ENCODE measurements at regions of chr1 and their contacts with region 1.

Region 1: GRCh38 chr1:205711104-205712020 is 31.1 kb upstream of the SLC45A3 start:
- DNase-seq: peak; percentile 55
- H3K4me3 ChIP-seq: no peak overlapping the region
- H3K27ac ChIP-seq: no peak overlapping the region
- H3K4me1 ChIP-seq: peaks cover 12% of the 10 kb centered on the region
- H3K27me3 ChIP-seq: no peaks in the 10 kb centered on the region
- CTCF ChIP-seq: peak; percentile 89 to 95

Region 2: DNA sequence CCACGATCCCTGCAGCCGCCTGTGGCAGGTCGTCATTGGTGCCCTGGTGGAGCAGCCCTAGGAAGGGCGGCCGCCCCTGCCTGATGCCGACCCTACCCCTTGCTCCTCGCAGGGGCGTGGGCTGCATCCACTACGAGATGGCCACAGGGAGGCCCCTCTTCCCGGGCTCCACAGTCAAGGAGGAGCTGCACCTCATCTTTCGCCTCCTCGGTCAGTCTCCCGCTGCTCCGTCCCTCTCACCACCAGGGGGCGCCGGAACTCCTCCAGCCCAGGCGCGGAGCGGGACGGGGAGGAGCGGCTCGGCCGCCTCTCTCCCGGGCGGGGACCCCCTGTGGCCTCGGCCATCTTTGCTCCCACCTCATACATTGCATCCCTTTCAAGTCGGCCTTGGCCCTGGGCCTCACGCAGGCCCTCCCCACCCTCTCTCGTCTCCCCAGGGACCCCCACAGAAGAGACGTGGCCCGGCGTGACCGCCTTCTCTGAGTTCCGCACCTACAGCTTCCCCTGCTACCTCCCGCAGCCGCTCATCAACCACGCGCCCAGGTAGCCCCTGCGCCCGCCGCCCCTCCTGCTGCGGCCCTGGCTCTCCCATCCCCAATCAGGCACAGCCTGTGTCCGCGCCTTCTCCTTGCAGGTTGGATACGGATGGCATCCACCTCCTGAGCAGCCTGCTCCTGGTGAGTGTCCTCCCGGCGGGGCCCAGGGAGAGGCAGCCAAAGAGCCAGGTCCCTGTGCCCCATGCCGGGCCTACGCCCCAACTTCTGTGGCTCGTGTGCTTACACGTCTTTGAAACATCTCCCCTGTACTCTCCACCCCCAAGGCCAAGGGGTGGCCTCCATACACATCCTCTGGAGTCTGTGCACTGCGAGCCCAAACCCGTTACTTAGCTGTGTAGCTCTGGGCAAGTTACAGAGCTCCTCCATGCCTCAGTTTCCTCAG is 182.2 kb before region 1 on chr1:
- CTCF ChIA-PET with region 1: no interaction called
- dilution Hi-C with region 1: no loop called
- in situ Hi-C with region 1: no loop called
- intact Hi-C with region 1: loop called (anchors 2 kb)
- DNase-seq: peak; percentile 35
- H3K4me3 ChIP-seq: no peak overlapping the region
- H3K27ac ChIP-seq: no peak overlapping the region
- H3K4me1 ChIP-seq: no peaks in the 10 kb centered on the region
- H3K27me3 ChIP-seq: no peaks in the 10 kb centered on the region
- CTCF ChIP-seq: peak; percentile 72 to 91

Region 3: GRCh38 chr1:205591522-205592351 is 119.6 kb before region 1 on chr1:
- CTCF ChIA-PET with region 1: interaction called, 3 read pairs
- dilution Hi-C with region 1: no loop called
- in situ Hi-C with region 1: loop called in 1 of 2 experiments (anchors 10 kb)
- intact Hi-C with region 1: loop called (anchors 1 kb)
- DNase-seq: peak; percentile 98
- H3K4me3 ChIP-seq: peak overlapping the region in 1 of 3 experiments; percentile 25
- H3K27ac ChIP-seq: peak overlapping the region; percentile 26
- H3K4me1 ChIP-seq: peaks cover 21% of the 10 kb centered on the region
- H3K27me3 ChIP-seq: no peaks in the 10 kb centered on the region
- CTCF ChIP-seq: peak; percentile 90 to 99

Region 4: GRCh38 chr1:205620269-205620668 is 91.1 kb before region 1 on chr1:
- CTCF ChIA-PET with region 1: no interaction called
- dilution Hi-C with region 1: loop called (anchors 5 kb)
- in situ Hi-C with region 1: no loop called
- intact Hi-C with region 1: no loop called
- DNase-seq: no peak
- H3K4me3 ChIP-seq: no peak overlapping the region
- H3K27ac ChIP-seq: no peak overlapping the region
- H3K4me1 ChIP-seq: peaks cover 12% of the 10 kb centered on the region
- H3K27me3 ChIP-seq: no peaks in the 10 kb centered on the region
- CTCF ChIP-seq: no peak

Region 5: DNA sequence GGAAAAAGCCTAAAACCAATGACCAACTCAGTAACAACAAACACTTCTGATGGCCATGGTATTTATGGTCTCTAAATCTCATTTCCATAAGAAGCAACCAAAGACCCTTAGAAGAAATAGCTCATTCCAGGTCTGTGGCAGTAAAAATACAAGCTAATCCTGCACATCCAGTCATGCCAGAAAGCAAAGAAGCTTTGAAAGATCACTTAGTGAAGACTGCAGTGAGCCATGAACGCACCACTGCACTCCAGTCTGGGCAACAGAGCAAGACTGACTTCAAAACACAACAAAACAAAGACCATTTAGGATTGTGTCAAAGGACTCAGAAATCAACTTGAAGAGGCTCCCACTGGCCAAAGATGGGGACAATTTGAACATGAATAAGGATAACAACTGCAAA is 61.1 kb before region 1 on chr1:
- CTCF ChIA-PET with region 1: no interaction called
- dilution Hi-C with region 1: loop called (anchors 5 kb)
- in situ Hi-C with region 1: no loop called
- intact Hi-C with region 1: no loop called
- DNase-seq: no peak
- H3K4me3 ChIP-seq: no peak overlapping the region
- H3K27ac ChIP-seq: no peak overlapping the region
- H3K4me1 ChIP-seq: no peaks in the 10 kb centered on the region
- H3K27me3 ChIP-seq: no peaks in the 10 kb centered on the region
- CTCF ChIP-seq: no peak

Region 6: DNA sequence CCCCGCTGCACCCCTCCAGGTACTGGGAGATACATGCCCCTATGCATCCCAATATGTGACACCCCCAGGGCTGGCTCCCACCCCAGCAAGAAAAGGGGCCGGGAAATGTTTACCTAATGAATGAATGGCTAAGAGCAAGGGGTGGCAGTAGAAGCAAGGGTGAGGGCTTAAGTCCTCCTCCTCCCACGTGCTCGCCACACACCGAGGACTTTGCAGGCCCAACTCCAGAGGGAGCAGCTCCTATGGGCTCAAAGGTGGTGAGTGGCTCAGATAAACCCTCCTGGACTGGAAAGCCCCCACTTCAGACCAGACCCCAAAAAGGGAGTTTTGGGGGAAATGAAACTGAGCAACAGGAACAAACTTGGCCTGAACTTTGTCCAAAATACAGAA is 42.4 kb before region 1 on chr1:
- CTCF ChIA-PET with region 1: interaction called, 3 read pairs
- dilution Hi-C with region 1: no loop called
- in situ Hi-C with region 1: loop called in 1 of 2 experiments (anchors 5 kb)
- intact Hi-C with region 1: loop called (anchors 1 kb)
- DNase-seq: no peak
- H3K4me3 ChIP-seq: no peak overlapping the region
- H3K27ac ChIP-seq: no peak overlapping the region
- H3K4me1 ChIP-seq: peaks cover 46% of the 10 kb centered on the region
- H3K27me3 ChIP-seq: no peaks in the 10 kb centered on the region
- CTCF ChIP-seq: peak in 1 of 2 donors; percentile 2

Measured in mammary epithelial cell (primary cell).